B cell (primary cell): ENCODE measurements at regions of chr9 and their contacts with region 1.

Region 1: DNA sequence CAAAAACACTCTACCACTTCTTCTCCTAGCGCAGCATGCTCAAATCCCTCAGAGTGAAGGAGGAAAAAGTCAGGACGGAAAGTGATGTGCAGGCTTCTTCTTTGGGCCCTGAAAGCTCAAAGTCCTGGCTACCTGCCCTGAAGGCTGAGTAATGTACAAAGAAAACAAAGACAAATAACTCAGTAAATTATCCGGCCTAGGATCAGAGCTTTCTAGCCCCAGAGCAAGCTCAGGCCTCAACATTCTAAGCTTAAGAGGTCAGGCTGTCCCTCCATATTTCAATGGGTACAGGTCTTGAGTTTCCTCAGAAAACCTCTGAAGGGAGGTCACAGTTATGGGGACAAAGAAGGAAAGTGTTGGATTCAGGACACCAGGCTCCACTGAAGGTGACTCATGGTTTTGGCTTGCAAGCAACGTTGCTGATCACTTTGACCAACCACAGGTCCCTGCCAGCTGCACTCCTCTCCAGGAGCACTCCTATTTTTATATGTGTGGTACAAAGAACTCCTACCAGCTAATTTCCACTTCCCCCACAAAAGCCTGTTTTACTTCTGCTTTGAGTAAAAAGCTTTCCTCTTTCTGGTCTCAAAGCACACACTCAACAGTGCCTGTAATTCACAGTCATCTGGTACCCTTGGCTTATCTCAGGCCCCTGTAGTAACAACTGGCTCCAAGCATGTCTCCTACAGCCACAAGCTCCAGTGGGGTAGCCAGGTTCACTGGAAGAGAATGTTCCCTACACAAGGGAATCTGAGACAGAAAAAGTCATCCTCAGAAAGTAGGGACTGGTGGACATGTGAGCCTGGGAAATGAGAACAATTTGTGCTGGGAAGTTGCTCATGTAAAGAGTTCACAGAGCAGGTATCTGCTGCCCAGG is 115.7 kb downstream of the UGCG start:
- DNase-seq: peak; percentile 62
- ATAC-seq: peak; percentile 82
- H3K4me3 ChIP-seq: peak overlapping the region in 1 of 5 experiments; percentile 22
- H3K4me3 Mint-ChIP-seq: peak overlapping the region; percentile 57
- H3K27ac ChIP-seq: peak overlapping the region; percentile 56 to 74
- H3K27ac Mint-ChIP-seq: peak overlapping the region; percentile 88
- H3K4me1 ChIP-seq: peaks cover 44% of the 10 kb centered on the region in 2 donors
- H3K4me1 Mint-ChIP-seq: peaks cover 65% of the 10 kb centered on the region
- H3K27me3 ChIP-seq: no peaks in the 10 kb centered on the region
- H3K27me3 Mint-ChIP-seq: no peaks in the 10 kb centered on the region
- CTCF ChIP-seq: no peak

Region 2: GRCh38 chr9:111945216-111945615 is 67.0 kb before region 1 on chr9:
- CTCF ChIA-PET with region 1: no interaction called
- POLR2A ChIA-PET with region 1: no interaction called
- intact Hi-C with region 1: no loop called
- DNase-seq: peak; percentile 64
- ATAC-seq: peak; percentile 86
- H3K4me3 ChIP-seq: peak overlapping the region in 1 of 5 experiments; percentile 27
- H3K4me3 Mint-ChIP-seq: peak overlapping the region; percentile 73
- H3K27ac ChIP-seq: no peak overlapping the region
- H3K27ac Mint-ChIP-seq: peak overlapping the region; percentile 67
- H3K4me1 ChIP-seq: peaks cover 29 to 38% of the 10 kb centered on the region in 2 donors
- H3K4me1 Mint-ChIP-seq: peaks cover 40% of the 10 kb centered on the region
- H3K27me3 ChIP-seq: no peaks in the 10 kb centered on the region
- H3K27me3 Mint-ChIP-seq: no peaks in the 10 kb centered on the region
- CTCF ChIP-seq: no peak

Region 3: GRCh38 chr9:112028280-112029221 is 16.3 kb after region 1 on chr9:
- CTCF ChIA-PET with region 1: interaction called, 3 read pairs
- POLR2A ChIA-PET with region 1: interaction called, 4 read pairs
- intact Hi-C with region 1: loop called (anchors 1 kb)
- DNase-seq: peak; percentile 56
- ATAC-seq: peak; percentile 53
- H3K4me3 ChIP-seq: no peak overlapping the region
- H3K4me3 Mint-ChIP-seq: peak overlapping the region; percentile 67
- H3K27ac ChIP-seq: peak overlapping the region in 1 of 2 donors; percentile 87
- H3K27ac Mint-ChIP-seq: peak overlapping the region; percentile 89
- H3K4me1 ChIP-seq: peaks cover 55% of the 10 kb centered on the region in 2 donors
- H3K4me1 Mint-ChIP-seq: peaks cover 55% of the 10 kb centered on the region
- H3K27me3 ChIP-seq: no peaks in the 10 kb centered on the region
- H3K27me3 Mint-ChIP-seq: no peaks in the 10 kb centered on the region
- CTCF ChIP-seq: no peak